Mammary epithelial cell (primary cell): ENCODE measurements at regions of chr6 and their contacts with region 1.

Region 1: DNA sequence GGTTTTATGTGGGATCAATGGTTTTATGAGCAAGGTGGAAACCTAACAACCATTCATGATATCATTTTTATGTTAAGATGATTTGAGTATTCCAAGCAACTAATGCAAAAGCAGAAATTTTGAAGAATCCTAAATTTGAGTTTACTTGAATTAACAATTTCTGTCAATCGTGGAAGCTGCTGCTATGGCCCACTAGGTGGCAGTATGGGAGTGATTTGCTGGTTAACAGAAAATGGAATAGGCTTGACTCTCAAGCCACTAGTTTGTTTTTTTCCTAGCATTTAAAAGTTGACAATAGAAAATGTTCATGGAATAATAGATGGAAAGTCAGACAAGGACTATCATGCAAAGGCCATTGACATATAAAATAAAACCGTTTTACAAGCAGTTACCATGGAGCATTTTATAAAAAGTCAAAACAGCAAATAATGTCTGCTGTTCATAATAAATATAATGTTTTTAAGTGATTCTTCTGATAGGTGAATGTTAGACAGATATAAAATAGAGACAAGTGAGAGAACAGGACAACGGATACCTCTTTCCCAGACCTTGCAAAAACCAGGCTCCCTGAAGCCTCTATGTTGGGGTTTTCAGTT is 43.0 kb upstream of the TMEM200A start:
- DNase-seq: peak; percentile 31
- H3K4me3 ChIP-seq: no peak overlapping the region
- H3K27ac ChIP-seq: no peak overlapping the region
- H3K4me1 ChIP-seq: peaks cover 4% of the 10 kb centered on the region
- H3K27me3 ChIP-seq: no peaks in the 10 kb centered on the region
- CTCF ChIP-seq: peak; percentile 90 to 98

Region 2: DNA sequence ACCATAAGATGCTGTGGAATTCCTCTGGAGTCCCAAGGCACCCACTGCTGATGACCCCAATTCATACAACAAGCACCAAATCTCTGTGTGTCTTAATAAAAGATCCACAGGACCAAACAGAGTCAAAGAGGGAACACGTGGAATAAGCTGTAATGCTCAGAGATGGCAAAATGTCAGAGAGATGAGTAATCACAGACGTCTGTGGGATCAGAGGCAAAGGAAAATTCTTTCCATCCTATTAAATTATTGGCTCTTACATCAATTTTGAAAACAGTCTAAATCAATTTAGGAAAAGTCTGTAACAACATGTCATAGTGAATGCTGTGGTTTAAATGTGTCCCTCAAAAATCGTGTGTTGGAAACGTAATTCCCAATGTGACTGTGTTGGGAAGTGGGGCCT is 82.5 kb before region 1 on chr6:
- CTCF ChIA-PET with region 1: no interaction called
- dilution Hi-C with region 1: no loop called
- in situ Hi-C with region 1: no loop called
- intact Hi-C with region 1: no loop called
- DNase-seq: peak; percentile 29
- H3K4me3 ChIP-seq: no peak overlapping the region
- H3K27ac ChIP-seq: no peak overlapping the region
- H3K4me1 ChIP-seq: no peaks in the 10 kb centered on the region
- H3K27me3 ChIP-seq: no peaks in the 10 kb centered on the region
- CTCF ChIP-seq: no peak

Region 3: DNA sequence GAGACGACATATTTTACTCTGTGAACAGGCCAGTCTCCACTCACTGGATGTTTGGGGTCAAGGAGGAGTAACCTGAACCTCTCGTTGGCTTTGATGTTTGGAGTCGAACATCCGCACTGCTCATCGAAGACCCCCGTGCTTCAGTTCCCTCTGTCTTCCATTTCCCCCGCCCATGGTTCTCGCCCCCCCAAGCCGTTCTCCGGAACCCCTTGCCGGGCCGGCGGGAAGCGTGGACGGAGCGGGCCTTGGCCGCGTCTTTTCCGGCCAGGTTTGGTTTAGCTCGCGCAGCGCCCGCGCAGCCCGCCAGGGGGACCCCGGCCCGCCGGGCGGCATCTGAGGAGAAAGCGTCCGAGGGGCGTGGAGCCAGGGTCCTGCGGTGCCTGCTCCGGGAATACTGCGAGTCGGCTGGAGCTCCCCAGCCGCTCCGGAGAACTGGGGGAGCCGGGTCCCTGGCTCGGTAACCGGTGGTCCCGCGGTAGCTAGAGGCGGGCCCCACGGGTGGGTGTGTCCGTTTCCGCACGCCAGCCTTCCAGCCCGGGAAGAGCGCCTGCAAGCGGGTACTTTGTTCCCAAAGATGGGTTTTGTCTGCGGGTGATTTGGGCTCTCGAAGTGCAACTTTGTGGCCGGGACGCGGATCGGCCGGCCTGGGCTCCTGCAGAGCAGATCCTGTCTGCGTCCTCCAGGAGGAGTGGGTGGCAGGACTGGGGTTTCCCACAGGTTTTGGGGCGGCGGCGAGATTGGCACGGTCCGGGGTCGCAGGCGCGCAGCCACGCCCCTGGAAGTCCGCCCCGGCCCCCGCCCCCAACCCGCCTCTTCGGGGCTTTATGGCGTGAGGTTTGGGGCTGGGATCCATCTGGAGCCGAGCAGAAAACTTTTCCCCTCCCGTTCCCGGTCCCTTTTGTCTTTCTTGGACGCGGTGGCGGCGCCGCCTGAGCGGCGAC is 42.7 kb after region 1 on chr6 and contains the start of gene TMEM200A:
- CTCF ChIA-PET with region 1: no interaction called
- dilution Hi-C with region 1: no loop called
- in situ Hi-C with region 1: no loop called
- intact Hi-C with region 1: loop called (anchors 2 kb)
- DNase-seq: peak; percentile 56
- H3K4me3 ChIP-seq: peak within 1 kb of the TSS; percentile 86 to 93 (median 93)
- H3K27ac ChIP-seq: peak within 1 kb of the TSS; percentile 76
- H3K4me1 ChIP-seq: peaks cover 5% of the 10 kb centered on the region
- H3K27me3 ChIP-seq: no peaks in the 10 kb centered on the region
- CTCF ChIP-seq: peak; percentile 42 to 88
- total RNA-seq, gene TMEM200A: 3.5 to 15.2 TPM

Region 4: DNA sequence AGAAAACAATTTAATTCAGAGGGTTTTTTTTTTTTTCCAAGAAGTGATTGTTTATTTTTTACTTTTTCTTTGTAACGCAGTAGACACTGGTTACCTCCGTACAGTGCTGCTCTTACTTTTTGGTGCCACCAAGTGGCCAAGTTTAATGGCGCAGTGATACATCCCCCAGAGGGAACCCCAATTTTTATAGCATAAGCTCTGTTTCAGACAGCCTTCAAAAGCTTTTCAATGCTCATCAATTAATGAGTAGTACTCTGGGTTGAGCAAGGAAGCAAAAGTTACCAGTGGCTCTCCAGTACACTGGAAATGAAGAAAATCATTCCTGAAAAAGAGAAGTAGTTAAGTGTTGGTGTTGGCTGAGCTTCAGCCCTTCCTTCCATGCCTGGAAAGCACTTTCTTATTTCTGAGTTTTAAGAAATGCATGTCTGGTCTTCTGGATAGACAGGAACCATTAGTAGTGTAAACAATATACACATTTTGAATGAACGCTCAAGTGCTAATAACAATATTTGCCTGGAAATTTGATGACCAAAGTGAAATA is 375.3 kb after region 1 on chr6:
- CTCF ChIA-PET with region 1: interaction called, 5 read pairs
- dilution Hi-C with region 1: no loop called
- in situ Hi-C with region 1: loop called (anchors 10 kb)
- intact Hi-C with region 1: loop called (anchors 1 kb)
- DNase-seq: peak; percentile 41
- H3K4me3 ChIP-seq: no peak overlapping the region
- H3K27ac ChIP-seq: peak overlapping the region; percentile 24
- H3K4me1 ChIP-seq: peaks cover 8% of the 10 kb centered on the region
- H3K27me3 ChIP-seq: no peaks in the 10 kb centered on the region
- CTCF ChIP-seq: peak; percentile 94 to 96

Region 5: DNA sequence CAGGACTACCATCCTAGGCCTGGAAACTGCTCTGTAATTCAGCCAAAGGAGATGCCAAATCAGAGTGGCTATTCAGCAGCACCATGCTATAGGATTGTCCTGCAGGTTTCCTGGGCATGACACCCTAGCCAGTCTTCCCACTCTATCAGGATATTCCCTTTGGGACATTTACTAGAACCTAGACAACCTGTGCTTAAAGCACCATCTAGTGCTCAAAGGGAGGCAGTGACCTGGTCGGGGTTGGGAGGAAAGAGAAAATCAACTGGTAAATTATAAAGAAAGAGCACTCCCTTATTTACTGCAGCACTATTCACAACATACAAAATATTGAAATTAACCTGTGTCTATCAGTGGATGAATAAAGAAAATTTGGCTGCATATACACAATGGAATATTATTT is 437.2 kb after region 1 on chr6:
- CTCF ChIA-PET with region 1: interaction called, 4 read pairs
- dilution Hi-C with region 1: no loop called
- in situ Hi-C with region 1: no loop called
- intact Hi-C with region 1: loop called (anchors 1 kb)
- DNase-seq: peak; percentile 47
- H3K4me3 ChIP-seq: no peak overlapping the region
- H3K27ac ChIP-seq: no peak overlapping the region
- H3K4me1 ChIP-seq: no peaks in the 10 kb centered on the region
- H3K27me3 ChIP-seq: peaks cover 8% of the 10 kb centered on the region
- CTCF ChIP-seq: peak; percentile 85 to 87

Region 6: GRCh38 chr6:130872250-130873095 is 549.7 kb after region 1 on chr6:
- CTCF ChIA-PET with region 1: no interaction called
- dilution Hi-C with region 1: no loop called
- in situ Hi-C with region 1: no loop called
- intact Hi-C with region 1: loop called (anchors 2 kb)
- DNase-seq: peak; percentile 26
- H3K4me3 ChIP-seq: no peak overlapping the region
- H3K27ac ChIP-seq: no peak overlapping the region
- H3K4me1 ChIP-seq: no peaks in the 10 kb centered on the region
- H3K27me3 ChIP-seq: no peaks in the 10 kb centered on the region
- CTCF ChIP-seq: peak; percentile 94 to 96